ENCODE measurements at regions of chr11 and their contacts with region 1.

Region 1: DNA sequence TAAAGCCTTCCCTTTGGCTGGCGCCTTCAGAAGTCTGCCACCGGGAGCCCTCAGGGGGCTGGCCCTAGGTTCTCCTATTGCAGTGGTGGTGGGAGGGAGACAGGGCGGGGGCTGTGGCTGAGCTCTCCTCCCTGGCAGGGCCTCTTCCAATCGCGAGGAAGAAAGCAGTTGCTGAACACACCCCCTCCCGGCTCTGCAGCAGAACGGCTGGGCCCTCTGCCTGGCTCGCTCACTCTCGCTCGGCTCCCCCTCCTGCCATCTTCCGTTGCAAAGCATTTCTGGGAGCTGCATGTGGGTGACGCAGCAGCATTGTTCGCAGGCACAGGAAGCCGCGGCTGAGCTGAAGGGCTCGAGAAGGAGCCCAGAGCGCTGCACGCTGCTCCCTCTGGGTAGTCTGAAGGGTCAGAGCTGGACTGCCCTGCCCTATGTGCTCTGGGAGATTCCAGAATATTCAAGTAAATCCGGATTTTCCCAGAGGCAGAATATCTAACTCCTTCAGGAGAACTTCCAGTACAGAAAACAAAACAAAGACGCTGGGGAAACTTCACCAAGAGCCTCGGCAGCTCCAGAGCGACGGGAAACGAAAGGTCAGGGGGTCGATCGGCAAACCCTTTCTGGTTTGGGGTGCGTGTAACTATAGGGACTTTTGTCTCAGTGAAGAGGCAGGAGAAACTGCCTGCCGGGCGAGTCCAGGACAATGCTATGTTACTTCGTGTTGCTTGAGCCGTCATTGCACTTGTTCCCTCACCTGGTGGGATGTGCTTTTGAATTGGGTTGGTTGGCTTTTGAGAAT is 26.3 kb upstream of the GRK2 start:
- DNase-seq: peak; percentile 80
- ATAC-seq: peak; percentile 92
- H3K4me3 Mint-ChIP-seq: peak overlapping the region; percentile 99
- H3K27ac Mint-ChIP-seq: peak overlapping the region; percentile 96
- H3K4me1 Mint-ChIP-seq: peaks cover 48% of the 10 kb centered on the region
- H3K27me3 Mint-ChIP-seq: no peaks in the 10 kb centered on the region
- CTCF ChIP-seq: no peak

Region 2: GRCh38 chr11:66938582-66939135 is 301.3 kb before region 1 on chr11:
- CTCF ChIA-PET with region 1: no interaction called
- POLR2A ChIA-PET with region 1: no interaction called
- intact Hi-C with region 1: no loop called
- DNase-seq: no peak
- ATAC-seq: no peak
- H3K4me3 Mint-ChIP-seq: no peak overlapping the region
- H3K27ac Mint-ChIP-seq: no peak overlapping the region
- H3K4me1 Mint-ChIP-seq: no peaks in the 10 kb centered on the region
- H3K27me3 Mint-ChIP-seq: peaks cover 17% of the 10 kb centered on the region
- CTCF ChIP-seq: no peak

Region 3: DNA sequence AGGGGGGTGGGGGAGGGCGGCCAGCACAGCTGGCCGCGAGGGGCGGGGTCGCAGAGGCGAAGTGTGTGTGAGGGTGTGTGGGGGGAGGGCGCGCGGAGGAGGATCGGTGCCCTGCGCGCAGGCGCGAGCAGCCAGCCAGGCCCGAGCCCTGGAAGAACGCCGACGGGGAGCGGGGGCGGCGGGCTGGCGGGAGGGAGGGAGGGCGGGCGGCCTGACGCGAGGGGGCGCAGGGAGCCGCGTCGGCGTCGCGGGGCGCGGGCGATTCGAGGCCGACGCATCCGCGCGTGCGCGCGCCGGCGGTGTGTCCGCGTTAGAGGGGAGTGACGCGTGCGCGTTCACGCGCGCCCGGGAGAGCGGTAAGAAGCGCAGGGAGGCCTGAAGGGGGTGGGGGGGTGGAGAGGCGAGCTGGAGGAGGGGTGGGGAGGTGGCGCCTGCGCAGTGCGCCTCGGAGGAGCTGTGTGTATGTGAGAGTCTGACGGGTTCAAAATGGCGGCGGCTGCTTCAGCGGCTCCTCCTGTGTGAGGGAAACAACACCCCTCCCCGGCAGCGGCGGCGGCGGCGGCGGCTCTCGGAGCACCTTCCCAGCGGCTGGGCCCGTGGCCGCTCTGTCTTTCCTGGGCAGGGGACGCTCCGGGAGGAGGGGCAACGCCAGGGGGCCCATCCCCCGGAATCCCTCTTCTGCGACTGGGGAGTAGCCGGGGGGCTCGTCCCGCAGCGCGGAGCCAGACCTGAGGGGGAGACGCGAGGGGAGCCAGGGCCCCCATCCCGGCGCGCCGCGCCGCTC is 121.0 kb before region 1 on chr11 and contains the start of gene KDM2A:
- CTCF ChIA-PET with region 1: no interaction called
- POLR2A ChIA-PET with region 1: interaction called, 16 read pairs
- intact Hi-C with region 1: loop called (anchors 1 kb)
- DNase-seq: peak; percentile 93
- ATAC-seq: peak; percentile 76
- H3K4me3 Mint-ChIP-seq: peak within 1 kb of the TSS; percentile 91
- H3K27ac Mint-ChIP-seq: peak within 1 kb of the TSS; percentile 91
- H3K4me1 Mint-ChIP-seq: peaks cover 36% of the 10 kb centered on the region
- H3K27me3 Mint-ChIP-seq: no peaks in the 10 kb centered on the region
- CTCF ChIP-seq: no peak
- total RNA-seq, gene KDM2A: 141 and 160 TPM in 2 replicates

Region 4: DNA sequence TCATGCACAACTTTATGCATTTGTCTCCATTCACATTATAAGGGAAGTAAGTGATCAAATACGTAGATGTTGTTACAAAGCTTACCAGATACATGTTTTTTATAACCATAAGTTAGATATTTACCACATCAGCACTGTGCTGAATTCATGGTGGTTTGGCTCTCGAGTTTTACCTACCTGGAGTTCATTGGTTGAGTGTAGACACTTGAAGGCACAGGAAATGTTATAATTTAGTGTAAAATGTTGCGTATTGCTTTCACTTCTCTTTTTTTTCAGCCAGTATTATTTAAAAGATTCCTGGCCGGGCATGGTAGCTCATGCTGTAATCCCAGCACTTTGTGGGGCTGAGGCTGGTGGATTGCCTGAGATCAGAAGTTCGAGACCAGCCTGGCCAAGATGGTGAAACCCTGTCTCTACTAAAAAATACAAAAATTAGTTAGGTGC is 26.8 kb before region 1 on chr11:
- CTCF ChIA-PET with region 1: interaction called, 9 read pairs
- POLR2A ChIA-PET with region 1: interaction called, 17 read pairs
- intact Hi-C with region 1: loop called (anchors 2 kb)
- DNase-seq: no peak
- ATAC-seq: peak; percentile 95
- H3K4me3 Mint-ChIP-seq: peak overlapping the region; percentile 36
- H3K27ac Mint-ChIP-seq: peak overlapping the region; percentile 55
- H3K4me1 Mint-ChIP-seq: peaks cover 20% of the 10 kb centered on the region
- H3K27me3 Mint-ChIP-seq: no peaks in the 10 kb centered on the region
- CTCF ChIP-seq: no peak

Region 5: GRCh38 chr11:67265633-67266423 is 25.8 kb after region 1 on chr11:
- CTCF ChIA-PET with region 1: interaction called, 8 read pairs
- POLR2A ChIA-PET with region 1: interaction called, 30 read pairs
- intact Hi-C with region 1: no loop called
- DNase-seq: peak; percentile 90
- ATAC-seq: peak; percentile 62
- H3K4me3 Mint-ChIP-seq: peak overlapping the region; percentile 77
- H3K27ac Mint-ChIP-seq: peak overlapping the region; percentile 84
- H3K4me1 Mint-ChIP-seq: peaks cover 67% of the 10 kb centered on the region
- H3K27me3 Mint-ChIP-seq: peaks cover 2% of the 10 kb centered on the region
- CTCF ChIP-seq: no peak

Region 6: GRCh38 chr11:67288452-67289225 is 48.7 kb after region 1 on chr11:
- CTCF ChIA-PET with region 1: no interaction called
- POLR2A ChIA-PET with region 1: interaction called, 34 read pairs
- intact Hi-C with region 1: loop called (anchors 1 kb)
- DNase-seq: peak; percentile 96
- ATAC-seq: peak; percentile 76
- H3K4me3 Mint-ChIP-seq: peak overlapping the region; percentile 80
- H3K27ac Mint-ChIP-seq: peak overlapping the region; percentile 98
- H3K4me1 Mint-ChIP-seq: peaks cover 46% of the 10 kb centered on the region
- H3K27me3 Mint-ChIP-seq: no peaks in the 10 kb centered on the region
- CTCF ChIP-seq: no peak

Region 7: DNA sequence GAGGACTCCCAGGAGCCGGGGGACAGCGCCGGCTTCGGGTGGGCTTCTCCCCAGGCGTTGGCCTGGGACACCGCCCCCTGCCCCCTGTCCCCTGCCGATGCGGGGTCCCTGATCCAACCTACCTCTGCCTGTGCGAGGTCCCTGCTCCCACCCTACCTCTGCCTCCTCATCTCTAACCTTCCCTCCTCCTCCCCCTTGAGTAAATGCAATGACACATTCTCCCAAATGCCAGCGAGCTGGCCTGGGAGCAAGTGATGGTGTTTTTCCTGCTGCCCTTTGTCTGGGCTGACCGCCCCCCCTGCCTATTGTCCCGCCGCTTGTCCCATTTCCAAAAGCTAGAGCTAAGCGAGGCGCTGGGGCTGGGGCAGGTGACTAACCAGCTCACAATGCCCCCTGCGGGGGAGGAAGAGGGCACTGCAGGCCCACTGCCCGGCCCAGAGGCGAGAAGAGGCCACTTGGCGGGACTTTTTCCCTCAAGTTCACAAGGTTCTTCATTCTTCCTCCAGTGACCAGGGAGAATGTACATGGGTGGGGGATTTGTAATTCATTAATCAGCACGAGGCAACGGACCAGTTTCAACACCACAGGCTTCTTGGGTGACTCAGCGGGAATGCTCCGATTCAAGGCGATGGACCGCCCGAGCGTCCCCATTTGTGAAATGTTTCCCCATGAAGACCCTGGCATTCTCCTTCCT is 134.1 kb after region 1 on chr11:
- CTCF ChIA-PET with region 1: no interaction called
- POLR2A ChIA-PET with region 1: interaction called, 14 read pairs
- intact Hi-C with region 1: no loop called
- DNase-seq: peak; percentile 63
- ATAC-seq: peak; percentile 47
- H3K4me3 Mint-ChIP-seq: peak overlapping the region; percentile 87
- H3K27ac Mint-ChIP-seq: peak overlapping the region; percentile 79
- H3K4me1 Mint-ChIP-seq: peaks cover 57% of the 10 kb centered on the region
- H3K27me3 Mint-ChIP-seq: no peaks in the 10 kb centered on the region
- CTCF ChIP-seq: no peak